ENCODE measurements at regions of chr3 and their contacts with region 1.

Region 1: DNA sequence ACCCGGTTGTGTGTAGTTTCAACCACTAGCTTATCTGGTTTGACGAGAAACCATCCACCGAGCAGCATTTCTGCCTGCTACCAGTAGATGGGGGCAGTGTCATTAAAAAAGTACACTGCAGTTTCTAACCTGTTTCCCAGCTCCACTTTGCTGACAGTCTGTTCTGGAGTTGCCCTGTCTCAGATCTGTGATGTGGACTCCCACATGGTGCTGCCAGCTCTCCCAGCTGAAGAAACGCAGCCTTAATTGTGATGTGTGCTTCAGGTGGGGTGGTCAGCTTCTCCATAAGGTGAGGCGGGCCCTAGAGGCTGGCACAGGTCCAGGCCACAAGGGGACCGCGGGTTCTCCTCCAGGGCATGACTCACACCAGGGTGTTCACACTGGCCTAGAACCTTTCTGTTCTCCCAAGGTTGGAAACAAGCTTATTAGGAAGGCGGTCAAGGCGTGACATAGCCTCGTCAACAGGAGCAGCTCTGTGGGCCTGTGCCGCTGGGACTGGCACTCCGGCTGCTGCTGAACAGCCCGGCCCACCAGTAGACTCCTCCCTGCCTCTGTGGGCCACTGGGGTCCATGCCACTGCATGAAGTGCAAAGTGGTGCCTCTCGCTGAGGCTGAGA is 2.9 kb upstream of the FAM43A start:
- DNase-seq: peak; percentile 84
- ATAC-seq: peak; percentile 61
- H3K4me3 Mint-ChIP-seq: no peak overlapping the region
- H3K27ac Mint-ChIP-seq: no peak overlapping the region
- H3K4me1 Mint-ChIP-seq: peaks cover 47% of the 10 kb centered on the region
- H3K27me3 Mint-ChIP-seq: peaks cover 37% of the 10 kb centered on the region

Region 2: DNA sequence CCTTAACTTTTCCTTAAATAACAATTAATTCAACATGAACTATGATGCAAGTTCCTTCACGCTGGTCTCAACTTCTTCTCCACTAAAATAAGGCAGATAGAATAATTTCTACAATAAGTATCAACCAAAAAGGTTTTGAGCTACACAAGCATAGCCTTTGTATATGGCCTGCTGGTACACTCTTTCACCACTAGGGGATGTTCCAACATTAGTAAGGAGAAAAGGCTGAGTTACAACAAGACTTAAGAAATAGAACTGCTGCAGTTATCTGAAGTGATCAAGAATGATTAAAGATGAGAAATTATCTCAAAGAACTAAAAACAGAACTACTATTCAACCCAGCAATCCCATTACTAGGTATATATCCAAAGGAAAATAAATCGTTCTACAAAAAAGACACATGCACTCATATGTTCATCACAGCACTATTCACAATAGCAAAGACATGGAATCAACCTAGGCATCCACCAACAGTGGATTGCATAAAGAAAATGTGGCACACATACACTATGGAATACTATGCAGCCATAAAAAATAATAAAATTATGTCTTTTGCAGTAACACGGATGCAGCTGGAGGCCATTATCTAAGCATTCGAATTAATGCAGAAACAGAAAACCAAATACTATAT is 210.4 kb before region 1 on chr3:
- CTCF ChIA-PET with region 1: no interaction called
- DNase-seq: no peak
- ATAC-seq: peak; percentile 93
- H3K4me3 Mint-ChIP-seq: no peak overlapping the region
- H3K27ac Mint-ChIP-seq: no peak overlapping the region
- H3K4me1 Mint-ChIP-seq: peaks cover 25% of the 10 kb centered on the region
- H3K27me3 Mint-ChIP-seq: no peaks in the 10 kb centered on the region

Region 3: GRCh38 chr3:194661374-194661773 is 21.4 kb before region 1 on chr3:
- CTCF ChIA-PET with region 1: interaction called, 12 read pairs
- DNase-seq: no peak
- ATAC-seq: no peak
- H3K4me3 Mint-ChIP-seq: no peak overlapping the region
- H3K27ac Mint-ChIP-seq: no peak overlapping the region
- H3K4me1 Mint-ChIP-seq: peaks cover 15% of the 10 kb centered on the region
- H3K27me3 Mint-ChIP-seq: no peaks in the 10 kb centered on the region

Region 4: GRCh38 chr3:195106418-195106906 is 423.7 kb after region 1 on chr3:
- CTCF ChIA-PET with region 1: interaction called, 28 read pairs
- DNase-seq: peak; percentile 65
- ATAC-seq: peak; percentile 90
- H3K4me3 Mint-ChIP-seq: no peak overlapping the region
- H3K27ac Mint-ChIP-seq: no peak overlapping the region
- H3K4me1 Mint-ChIP-seq: peaks cover 8% of the 10 kb centered on the region
- H3K27me3 Mint-ChIP-seq: no peaks in the 10 kb centered on the region

Region 5: GRCh38 chr3:195259475-195260279 is 576.9 kb after region 1 on chr3:
- CTCF ChIA-PET with region 1: interaction called, 63 read pairs
- DNase-seq: peak; percentile 93
- ATAC-seq: peak; percentile 83
- H3K4me3 Mint-ChIP-seq: no peak overlapping the region
- H3K27ac Mint-ChIP-seq: peak overlapping the region; percentile 22
- H3K4me1 Mint-ChIP-seq: peaks cover 16% of the 10 kb centered on the region
- H3K27me3 Mint-ChIP-seq: no peaks in the 10 kb centered on the region